ENCODE measurements at regions of chr6 and their contacts with region 1.

Region 1: GRCh38 chr6:41367700-41368099 is 32.3 kb downstream of the NCR2 start:
- DNase-seq: peak; percentile 60
- ATAC-seq: peak; percentile 92
- H3K4me3 ChIP-seq: no peak overlapping the region
- H3K27ac ChIP-seq: no peak overlapping the region
- H3K4me1 ChIP-seq: peaks cover 2 to 3% of the 10 kb centered on the region in 2 experiments; a peak in 1 of 4 replicates
- H3K27me3 ChIP-seq: peaks cover 4% of the 10 kb centered on the region; the same call in 1 of the 2 replicates
- CTCF ChIP-seq: peak; percentile 80 to 91 (median 86)
- POLR2A ChIP-seq: no peak
- RAD21 ChIP-seq: peak; percentile 93

Region 2: GRCh38 chr6:41386594-41386993 is 18.9 kb after region 1 on chr6:
- CTCF ChIA-PET with region 1: no interaction called
- POLR2A ChIA-PET with region 1: no interaction called
- RAD21 ChIA-PET with region 1: no interaction called
- intact Hi-C with region 1: no loop called
- DNase-seq: no peak
- ATAC-seq: no peak
- H3K4me3 ChIP-seq: no peak overlapping the region
- H3K27ac ChIP-seq: no peak overlapping the region
- H3K4me1 ChIP-seq: no peaks in the 10 kb centered on the region
- H3K27me3 ChIP-seq: peaks cover 17% of the 10 kb centered on the region; the same call in 1 of the 2 replicates
- CTCF ChIP-seq: no peak
- POLR2A ChIP-seq: no peak
- RAD21 ChIP-seq: no peak

Region 3: DNA sequence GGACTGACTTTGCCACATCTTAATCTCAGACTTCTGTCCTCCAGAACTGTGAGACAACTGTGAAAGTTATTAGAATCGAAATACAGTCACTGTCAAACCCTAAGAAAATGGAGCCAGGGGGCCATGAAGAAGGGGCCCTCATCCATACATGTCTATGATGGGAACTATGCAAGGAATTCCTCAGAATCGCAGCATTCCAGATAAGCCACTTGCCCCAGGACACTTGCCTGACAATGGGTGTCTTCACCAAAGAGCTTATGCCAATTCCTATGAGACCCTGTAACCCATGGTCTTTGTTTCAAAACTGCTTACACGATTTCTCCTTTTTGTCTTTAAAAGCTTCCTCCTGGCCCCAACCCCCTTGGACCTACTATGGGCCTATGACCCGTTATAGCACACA is 88.1 kb after region 1 on chr6:
- CTCF ChIA-PET with region 1: no interaction called
- POLR2A ChIA-PET with region 1: no interaction called
- RAD21 ChIA-PET with region 1: no interaction called
- intact Hi-C with region 1: loop called (anchors 2 kb)
- DNase-seq: no peak
- ATAC-seq: no peak
- H3K4me3 ChIP-seq: no peak overlapping the region
- H3K27ac ChIP-seq: no peak overlapping the region
- H3K4me1 ChIP-seq: peaks cover 6 to 17% of the 10 kb centered on the region in 2 experiments; a peak in 3 of 4 replicates
- H3K27me3 ChIP-seq: no peaks in the 10 kb centered on the region
- CTCF ChIP-seq: no peak
- POLR2A ChIP-seq: no peak
- RAD21 ChIP-seq: no peak

Region 4: GRCh38 chr6:41602864-41603608 is 235.3 kb after region 1 on chr6:
- CTCF ChIA-PET with region 1: interaction called, 31 read pairs
- POLR2A ChIA-PET with region 1: no interaction called
- RAD21 ChIA-PET with region 1: interaction called, 5 read pairs
- intact Hi-C with region 1: loop called (anchors 1 kb)
- DNase-seq: peak; percentile 81
- ATAC-seq: peak; percentile 82
- H3K4me3 ChIP-seq: peak overlapping the region; percentile 6 to 40
- H3K27ac ChIP-seq: no peak overlapping the region
- H3K4me1 ChIP-seq: peaks cover 3 to 12% of the 10 kb centered on the region in 2 experiments; a peak in 3 of 4 replicates
- H3K27me3 ChIP-seq: no peaks in the 10 kb centered on the region
- CTCF ChIP-seq: peak; percentile 86 to 98 (median 90)
- POLR2A ChIP-seq: peak; percentile 42
- RAD21 ChIP-seq: peak; percentile 96

Region 5: DNA sequence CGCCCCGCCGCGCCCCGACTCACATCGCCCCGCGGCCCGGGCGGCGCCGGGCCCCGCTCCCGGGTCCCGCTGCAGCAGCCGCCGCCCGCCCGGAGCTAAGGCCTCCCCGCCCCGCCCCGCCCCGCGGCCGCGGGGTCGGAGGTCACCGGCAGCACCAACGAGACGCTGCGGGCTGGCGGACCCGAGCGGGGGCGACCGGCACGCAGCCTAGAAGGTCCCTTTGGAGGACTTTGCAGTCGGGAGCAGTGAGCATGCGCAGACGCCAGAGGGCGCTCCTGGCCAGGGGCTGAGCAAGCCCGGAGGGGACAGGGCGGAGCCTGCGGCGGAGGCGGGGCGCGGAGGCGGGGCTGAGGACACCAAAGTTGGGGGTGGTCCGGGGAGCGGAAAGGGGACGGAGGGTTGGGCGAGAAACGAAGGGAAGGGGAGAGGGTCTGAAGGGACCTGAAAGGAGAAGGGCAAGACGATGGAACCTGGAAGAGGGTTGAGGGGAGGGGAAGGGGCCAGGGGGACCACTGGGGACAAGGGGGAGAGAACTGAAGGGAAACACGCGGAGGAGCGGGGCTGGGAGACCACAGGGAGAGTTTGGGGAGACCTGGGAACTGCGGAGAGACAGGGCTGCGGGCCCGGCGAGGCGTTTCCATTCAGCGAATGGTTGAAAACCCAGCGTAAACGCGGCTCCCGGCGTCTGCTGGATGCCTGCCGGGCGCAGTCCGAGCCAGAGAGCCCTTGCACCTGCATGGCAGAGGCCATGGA is 412.3 kb after region 1 on chr6 and contains the start of gene FRS3:
- CTCF ChIA-PET with region 1: no interaction called
- POLR2A ChIA-PET with region 1: no interaction called
- RAD21 ChIA-PET with region 1: no interaction called
- intact Hi-C with region 1: loop called (anchors 2 kb)
- DNase-seq: peak; percentile 90
- ATAC-seq: peak; percentile 91
- H3K4me3 ChIP-seq: peak within 1 kb of the TSS; percentile 77 to 83
- H3K27ac ChIP-seq: peak within 1 kb of the TSS; percentile 69
- H3K4me1 ChIP-seq: peaks cover 14 to 23% of the 10 kb centered on the region in 2 experiments
- H3K27me3 ChIP-seq: no peaks in the 10 kb centered on the region
- CTCF ChIP-seq: peak in 2 of 3 experiments; percentile 86 to 90; a peak in 4 of 6 replicates
- POLR2A ChIP-seq: no peak
- RAD21 ChIP-seq: no peak
- total RNA-seq, gene FRS3: 5.9 TPM

Region 6: GRCh38 chr6:42043787-42044475 is 676.2 kb after region 1 on chr6:
- CTCF ChIA-PET with region 1: no interaction called
- POLR2A ChIA-PET with region 1: no interaction called
- RAD21 ChIA-PET with region 1: no interaction called
- intact Hi-C with region 1: loop called (anchors 2 kb)
- DNase-seq: peak; percentile 62
- ATAC-seq: peak; percentile 87
- H3K4me3 ChIP-seq: no peak overlapping the region
- H3K27ac ChIP-seq: no peak overlapping the region
- H3K4me1 ChIP-seq: peaks cover 29 to 41% of the 10 kb centered on the region in 2 experiments
- H3K27me3 ChIP-seq: no peaks in the 10 kb centered on the region
- CTCF ChIP-seq: peak in 2 of 3 experiments; percentile 96; a peak in 4 of 6 replicates
- POLR2A ChIP-seq: no peak
- RAD21 ChIP-seq: no peak

Measured in HCT116 (cell line).